ENCODE measurements at regions of chr7 and their contacts with region 1.

Region 1: GRCh38 chr7:28685644-28686417 is 272.3 kb downstream of the TRIL start:
- DNase-seq: peak; percentile 64 to 97 (median 94)
- H3K4me3 ChIP-seq: peak overlapping the region; percentile 26 to 81 (median 64)
- H3K27ac ChIP-seq: peak overlapping the region; percentile 67 to 97 (median 91)
- H3K27me3 ChIP-seq: no peaks in the 10 kb centered on the region
- CTCF ChIP-seq: peak in 23 of 56 donors; percentile 7 to 46 (median 20)

Region 2: DNA sequence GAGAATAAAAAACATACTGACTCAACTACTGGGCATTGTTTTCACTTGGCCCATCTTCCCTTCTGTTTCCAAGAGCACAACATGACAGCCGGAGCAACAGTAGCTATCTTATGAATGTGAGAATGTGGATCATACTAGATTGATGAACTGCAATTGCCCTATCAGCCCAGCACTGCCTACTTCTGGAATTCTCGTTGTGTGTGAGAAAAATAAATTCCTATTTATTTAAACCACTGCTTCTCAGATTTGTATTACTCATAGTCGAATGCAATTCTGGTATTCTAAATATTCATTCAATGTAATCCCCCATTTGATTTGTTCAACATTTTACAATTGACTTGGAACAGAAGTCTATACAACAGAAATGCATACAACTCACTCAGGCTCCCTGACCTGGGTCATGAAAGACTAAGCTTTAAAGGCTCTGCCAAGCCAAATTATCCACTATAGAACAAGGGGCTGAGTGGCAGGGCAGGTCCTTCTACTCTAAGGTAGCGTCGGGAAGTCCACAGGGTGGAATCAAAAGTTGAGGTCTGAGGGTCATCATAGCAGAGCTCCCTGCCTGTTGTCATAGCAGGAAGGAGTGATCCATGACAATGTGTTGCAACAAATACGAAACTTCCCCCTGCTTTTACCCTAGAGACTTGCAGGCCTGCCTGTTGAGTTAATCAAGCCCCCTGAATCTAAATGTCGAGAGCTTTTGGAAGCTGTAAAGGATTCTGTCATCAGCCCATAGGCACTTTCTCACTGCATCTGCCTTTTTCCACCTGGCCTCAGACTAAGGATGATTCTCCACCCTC is 492.8 kb before region 1 on chr7:
- intact Hi-C with region 1: no loop called
- DNase-seq: no peak
- H3K4me3 ChIP-seq: no peak overlapping the region
- H3K27ac ChIP-seq: no peak overlapping the region
- H3K27me3 ChIP-seq: no peaks in the 10 kb centered on the region
- CTCF ChIP-seq: no peak

Region 3: DNA sequence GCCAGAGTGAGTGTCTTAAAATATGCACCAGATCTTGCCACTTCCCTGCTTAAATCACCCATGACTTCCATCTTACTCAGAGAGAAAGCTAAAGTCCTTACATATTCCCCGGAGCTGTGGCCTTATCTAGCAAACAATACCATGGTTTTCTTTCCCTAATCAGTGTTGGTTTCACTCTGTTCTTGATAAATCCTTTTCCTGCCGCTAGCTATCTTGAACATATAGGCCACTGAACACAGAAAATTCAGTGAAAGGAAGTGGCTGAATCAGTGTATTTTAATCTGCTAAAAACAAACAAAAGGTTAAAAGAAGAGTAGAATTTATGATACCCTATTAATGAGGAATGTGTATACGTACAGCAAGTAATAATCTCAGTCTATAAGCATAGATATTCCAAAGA is 463.2 kb before region 1 on chr7:
- intact Hi-C with region 1: no loop called
- DNase-seq: no peak
- H3K4me3 ChIP-seq: no peak overlapping the region
- H3K27ac ChIP-seq: no peak overlapping the region
- H3K27me3 ChIP-seq: no peaks in the 10 kb centered on the region
- CTCF ChIP-seq: no peak

Region 4: GRCh38 chr7:28389504-28390395 is 296.1 kb before region 1 on chr7:
- intact Hi-C with region 1: loop called in 1 of 2 experiments (anchors 5 kb)
- DNase-seq: peak in 1 of 10 donors; percentile 33
- H3K4me3 ChIP-seq: peak overlapping the region in 58 of 59 donors; percentile 8 to 67 (median 44)
- H3K27ac ChIP-seq: peak overlapping the region in 34 of 59 donors; percentile 0 to 79 (median 52)
- H3K27me3 ChIP-seq: peaks cover 0 to 4% (median 0%) of the 10 kb centered on the region in 45 donors
- CTCF ChIP-seq: peak; percentile 73 to 92 (median 84)

Region 5: GRCh38 chr7:28647081-28647421 is 38.8 kb before region 1 on chr7:
- intact Hi-C with region 1: loop called in 1 of 2 experiments (anchors 5 kb)
- DNase-seq: peak in 7 of 10 donors; percentile 13 to 65 (median 48)
- H3K4me3 ChIP-seq: peak overlapping the region in 7 of 59 donors; percentile 2 to 34 (median 18)
- H3K27ac ChIP-seq: peak overlapping the region in 42 of 59 donors; percentile 2 to 81 (median 49)
- H3K27me3 ChIP-seq: no peaks in the 10 kb centered on the region
- CTCF ChIP-seq: peak in 1 of 56 donors; percentile 11

Region 6: DNA sequence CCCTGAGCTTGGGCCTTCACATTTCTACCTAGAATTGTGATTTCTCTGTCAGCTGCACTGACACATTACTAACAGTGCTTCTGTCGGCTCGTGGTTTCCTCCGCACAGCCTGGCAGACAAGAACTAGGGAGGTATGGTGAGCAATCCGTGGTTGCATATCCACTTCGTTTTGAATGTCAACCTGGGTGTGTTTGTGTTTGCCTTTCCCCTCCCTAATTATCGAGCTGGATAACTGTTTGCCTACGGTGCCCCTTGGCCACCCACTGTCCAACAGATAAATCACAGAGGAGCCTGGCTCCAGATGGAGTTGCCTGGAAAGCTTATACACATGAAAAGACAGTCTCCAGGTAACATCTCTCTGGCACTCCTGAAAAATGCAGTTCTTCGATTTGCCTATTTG is 43.5 kb after region 1 on chr7:
- intact Hi-C with region 1: loop called in 1 of 2 experiments (anchors 5 kb)
- DNase-seq: no peak
- H3K4me3 ChIP-seq: no peak overlapping the region
- H3K27ac ChIP-seq: peak overlapping the region in 57 of 59 donors; percentile 0 to 92 (median 69)
- H3K27me3 ChIP-seq: no peaks in the 10 kb centered on the region
- CTCF ChIP-seq: no peak

Region 7: DNA sequence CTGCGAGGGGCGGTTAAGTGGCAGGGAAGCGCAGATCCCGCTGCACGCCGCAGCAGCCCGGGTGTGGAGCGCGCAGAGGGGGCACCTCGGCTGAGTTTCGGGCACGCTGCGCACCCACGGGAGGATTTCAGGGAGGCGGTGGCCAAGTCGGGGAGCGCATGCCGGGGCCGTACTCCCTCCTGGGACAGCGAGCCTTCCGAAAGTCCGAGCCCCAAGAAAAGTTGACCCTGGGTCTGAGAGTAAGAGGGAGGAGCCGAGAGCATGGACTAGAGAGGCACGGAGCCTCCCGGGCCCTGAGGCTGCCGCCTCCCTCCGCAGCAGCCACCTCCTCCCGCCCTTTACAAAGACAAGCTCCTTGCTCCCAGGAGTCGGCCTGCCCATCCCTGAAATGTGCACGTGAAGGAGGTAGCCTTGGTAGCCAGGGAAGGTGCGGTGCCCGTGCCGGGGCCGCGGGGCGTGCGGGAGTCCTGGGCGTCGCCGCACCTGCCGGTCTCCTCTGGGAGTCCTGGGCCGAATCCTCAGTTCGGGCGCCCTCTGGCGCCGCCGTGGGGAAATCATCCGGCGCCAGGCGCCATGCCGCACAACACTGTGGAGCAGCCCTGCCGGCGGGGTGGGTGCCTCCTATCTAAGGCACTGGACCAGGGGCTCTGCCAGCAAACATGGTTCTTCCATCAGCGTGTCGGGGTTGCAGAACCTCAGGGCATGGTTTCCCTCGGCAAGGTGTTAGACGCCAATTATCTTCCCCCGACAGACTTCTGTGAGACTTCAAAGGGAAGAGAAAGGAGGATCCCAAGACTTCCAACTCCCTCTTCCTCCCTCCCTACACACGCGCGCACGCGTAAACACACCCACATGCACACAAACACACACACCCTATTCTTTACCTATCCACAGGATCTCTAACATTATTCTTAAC is 168.3 kb after region 1 on chr7:
- intact Hi-C with region 1: loop called (anchors 1 to 5 kb)
- DNase-seq: peak; percentile 78 to 93 (median 84)
- H3K4me3 ChIP-seq: peak overlapping the region; percentile 31 to 91 (median 71)
- H3K27ac ChIP-seq: peak overlapping the region in 26 of 59 donors; percentile 6 to 80 (median 46)
- H3K27me3 ChIP-seq: peaks cover 0 to 12% (median 0%) of the 10 kb centered on the region in 45 donors
- CTCF ChIP-seq: peak; percentile 74 to 98 (median 94)

Region 8: DNA sequence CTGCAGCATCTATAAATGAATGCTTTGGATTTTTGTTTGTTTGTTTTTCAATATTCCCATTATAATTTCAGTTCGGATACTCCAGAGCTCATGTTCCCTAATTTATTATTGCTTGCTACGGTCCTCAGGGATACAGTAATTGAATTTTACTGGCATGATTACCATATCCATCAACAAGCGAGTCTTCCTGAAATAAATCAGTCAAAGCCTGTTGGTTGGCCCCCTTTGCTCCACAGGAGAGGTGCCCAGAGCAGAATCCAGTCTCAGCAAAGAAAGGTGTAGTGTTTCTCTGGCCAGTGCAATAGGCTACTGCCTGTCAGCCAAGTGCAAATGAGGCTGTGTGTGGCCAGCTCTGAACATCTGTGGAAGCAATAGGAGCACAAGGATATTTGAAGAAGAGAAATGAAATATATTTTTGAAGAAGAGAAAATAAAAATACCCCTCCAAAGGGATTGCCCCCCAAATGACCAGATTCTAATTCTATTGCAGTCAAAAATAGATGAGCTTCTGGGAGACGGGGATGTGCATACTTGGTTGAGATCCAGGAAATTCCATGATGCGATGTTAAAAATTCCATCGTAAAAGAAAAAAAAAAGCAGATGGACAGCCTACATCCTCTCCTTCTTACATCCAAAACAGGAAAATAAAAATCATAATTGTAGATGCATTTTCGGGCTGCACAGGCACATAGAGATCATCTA is 254.2 kb after region 1 on chr7:
- intact Hi-C with region 1: no loop called
- DNase-seq: no peak
- H3K4me3 ChIP-seq: no peak overlapping the region
- H3K27ac ChIP-seq: no peak overlapping the region
- H3K27me3 ChIP-seq: peaks cover 0 to 18% (median 0%) of the 10 kb centered on the region in 45 donors
- CTCF ChIP-seq: no peak